ENCODE measurements at regions of chr4 and their contacts with region 1.

Region 1: GRCh38 chr4:41751449-41752061 is 3.0 kb upstream of the PHOX2B start:
- DNase-seq: peak; percentile 78
- H3K4me3 ChIP-seq: peak overlapping the region in 1 of 2 experiments; percentile 56; a peak in 1 of 4 replicates
- H3K27ac ChIP-seq: peak overlapping the region in 1 of 2 experiments; percentile 100; a peak in 2 of 4 replicates
- H3K4me1 ChIP-seq: peaks cover 0 to 34% of the 10 kb centered on the region in 2 experiments; a peak in 2 of 4 replicates
- H3K27me3 ChIP-seq: peaks cover 63% of the 10 kb centered on the region
- CTCF ChIP-seq: peak; percentile 36
- EP300 ChIP-seq: no peak
- RAD21 ChIP-seq: peak; percentile 32

Region 2: DNA sequence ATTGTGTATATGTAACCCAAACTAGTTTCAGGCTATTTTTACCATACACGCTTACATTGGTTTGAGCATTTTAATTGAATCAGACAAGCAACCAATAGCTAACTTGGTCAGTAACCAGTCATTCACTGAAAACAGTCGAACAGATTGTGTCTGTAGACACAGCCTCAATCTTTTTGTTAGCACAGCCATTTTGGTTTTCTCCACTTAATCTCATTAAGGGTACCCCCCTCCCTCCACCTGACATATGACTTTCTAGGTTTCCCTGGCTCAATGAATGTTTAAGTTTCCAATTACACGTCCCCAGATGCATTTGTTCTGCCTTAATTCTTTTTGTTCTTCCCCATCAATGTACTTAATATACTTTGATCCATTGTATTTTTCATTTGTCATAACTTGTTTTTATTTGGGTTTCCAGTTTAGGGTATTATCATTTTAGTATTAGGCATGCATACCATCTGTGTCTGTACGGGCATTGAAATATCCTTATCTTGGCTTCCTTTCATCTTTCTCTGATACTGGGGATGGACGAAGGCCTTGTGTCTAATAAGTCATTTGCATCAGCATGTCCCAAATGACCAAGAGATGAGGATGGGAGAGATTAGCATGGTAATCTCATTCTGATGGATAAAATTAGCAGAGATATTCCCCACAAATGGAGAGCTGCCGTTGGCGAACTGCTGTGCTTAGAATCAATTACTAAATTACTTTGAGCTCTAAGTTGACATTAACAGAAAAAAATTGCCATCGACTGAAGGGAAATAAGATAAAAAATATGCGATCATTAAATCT is 32.8 kb after region 1 on chr4:
- CTCF ChIA-PET with region 1: interaction called, 7 read pairs
- POLR2A ChIA-PET with region 1: interaction called, 18 read pairs
- DNase-seq: peak; percentile 62
- H3K4me3 ChIP-seq: no peak overlapping the region; a peak in 1 of 4 replicates
- H3K27ac ChIP-seq: peak overlapping the region in 1 of 2 experiments; percentile 98; a peak in 2 of 4 replicates
- H3K4me1 ChIP-seq: peaks cover 0 to 24% of the 10 kb centered on the region in 2 experiments; a peak in 2 of 4 replicates
- H3K27me3 ChIP-seq: no peaks in the 10 kb centered on the region
- CTCF ChIP-seq: no peak
- EP300 ChIP-seq: peak in 1 of 2 experiments; percentile 83; a peak in 2 of 4 replicates
- RAD21 ChIP-seq: no peak

Region 3: DNA sequence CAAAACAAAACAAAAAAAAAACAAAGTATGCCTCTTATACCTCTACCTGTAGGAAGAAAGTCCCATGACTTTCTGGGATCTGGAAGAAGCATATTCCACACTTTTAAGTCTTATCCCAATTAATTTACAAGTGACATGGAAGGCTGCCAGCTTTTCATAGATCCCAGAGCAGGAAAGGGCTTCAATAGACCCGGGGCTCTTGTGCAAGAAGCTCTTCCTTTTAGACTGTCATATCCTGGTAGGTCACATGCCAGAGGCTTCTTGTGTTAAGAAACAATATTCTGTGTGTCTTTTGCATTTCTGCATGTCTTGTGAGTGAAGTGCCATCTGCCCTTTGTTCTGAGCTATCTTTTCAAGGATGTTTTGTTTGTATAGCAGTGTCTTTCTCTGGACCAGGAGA is 81.4 kb after region 1 on chr4:
- CTCF ChIA-PET with region 1: interaction called, 9 read pairs
- POLR2A ChIA-PET with region 1: interaction called, 39 read pairs
- DNase-seq: no peak
- H3K4me3 ChIP-seq: no peak overlapping the region
- H3K27ac ChIP-seq: peak overlapping the region in 1 of 2 experiments; percentile 88; a peak in 2 of 4 replicates
- H3K4me1 ChIP-seq: peaks cover 0 to 11% of the 10 kb centered on the region in 2 experiments; a peak in 2 of 4 replicates
- H3K27me3 ChIP-seq: no peaks in the 10 kb centered on the region
- CTCF ChIP-seq: no peak
- EP300 ChIP-seq: no peak
- RAD21 ChIP-seq: no peak

Region 4: DNA sequence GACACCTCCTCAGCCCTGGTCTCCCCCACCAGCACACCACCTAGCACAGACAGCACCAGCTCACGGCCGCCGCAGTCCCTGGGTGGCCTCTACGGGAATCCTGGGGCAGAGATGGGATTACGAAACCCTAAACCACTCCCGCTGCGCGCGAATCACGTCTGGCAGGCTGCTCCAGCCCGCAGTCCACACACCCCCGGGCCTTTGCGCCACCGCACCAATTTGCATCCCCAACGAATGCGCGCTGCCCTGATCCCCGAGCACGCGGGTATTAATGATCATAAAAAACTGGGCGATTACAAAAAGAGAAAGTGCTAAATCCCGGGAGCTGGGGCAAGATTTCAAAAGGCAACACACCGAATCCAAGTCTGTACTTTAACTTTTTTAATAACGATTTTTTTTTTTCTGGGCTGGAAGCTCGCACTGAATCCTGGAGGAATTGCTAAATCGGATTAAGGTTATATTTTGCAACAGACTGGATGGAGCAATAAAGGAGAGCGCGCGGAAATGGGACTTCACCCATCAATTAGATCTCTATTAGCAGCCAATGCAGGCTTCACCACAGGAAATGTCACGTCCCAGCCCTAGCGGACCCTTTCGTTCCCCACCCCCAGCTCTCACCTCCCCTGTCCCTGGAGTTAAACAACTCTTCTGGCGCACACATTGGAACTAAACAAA is 113.9 kb after region 1 on chr4:
- CTCF ChIA-PET with region 1: interaction called, 34 read pairs
- POLR2A ChIA-PET with region 1: interaction called, 288 read pairs
- DNase-seq: no peak
- H3K4me3 ChIP-seq: no peak overlapping the region
- H3K27ac ChIP-seq: peak overlapping the region in 1 of 2 experiments; percentile 100; a peak in 2 of 4 replicates
- H3K4me1 ChIP-seq: peaks cover 0 to 46% of the 10 kb centered on the region in 2 experiments; a peak in 2 of 4 replicates
- H3K27me3 ChIP-seq: no peaks in the 10 kb centered on the region
- CTCF ChIP-seq: no peak
- EP300 ChIP-seq: no peak
- RAD21 ChIP-seq: no peak

Region 5: GRCh38 chr4:41882625-41883347 is 131.2 kb after region 1 on chr4:
- CTCF ChIA-PET with region 1: interaction called, 35 read pairs
- POLR2A ChIA-PET with region 1: interaction called, 461 read pairs
- DNase-seq: peak; percentile 90
- H3K4me3 ChIP-seq: peak overlapping the region; percentile 58
- H3K27ac ChIP-seq: peak overlapping the region in 1 of 2 experiments; percentile 99; a peak in 2 of 4 replicates
- H3K4me1 ChIP-seq: peaks cover 0 to 47% of the 10 kb centered on the region in 2 experiments; a peak in 3 of 4 replicates
- H3K27me3 ChIP-seq: peaks cover 52% of the 10 kb centered on the region
- CTCF ChIP-seq: peak; percentile 95
- EP300 ChIP-seq: peak in 1 of 2 experiments; percentile 38; a peak in 2 of 4 replicates
- RAD21 ChIP-seq: peak; percentile 75

Region 6: DNA sequence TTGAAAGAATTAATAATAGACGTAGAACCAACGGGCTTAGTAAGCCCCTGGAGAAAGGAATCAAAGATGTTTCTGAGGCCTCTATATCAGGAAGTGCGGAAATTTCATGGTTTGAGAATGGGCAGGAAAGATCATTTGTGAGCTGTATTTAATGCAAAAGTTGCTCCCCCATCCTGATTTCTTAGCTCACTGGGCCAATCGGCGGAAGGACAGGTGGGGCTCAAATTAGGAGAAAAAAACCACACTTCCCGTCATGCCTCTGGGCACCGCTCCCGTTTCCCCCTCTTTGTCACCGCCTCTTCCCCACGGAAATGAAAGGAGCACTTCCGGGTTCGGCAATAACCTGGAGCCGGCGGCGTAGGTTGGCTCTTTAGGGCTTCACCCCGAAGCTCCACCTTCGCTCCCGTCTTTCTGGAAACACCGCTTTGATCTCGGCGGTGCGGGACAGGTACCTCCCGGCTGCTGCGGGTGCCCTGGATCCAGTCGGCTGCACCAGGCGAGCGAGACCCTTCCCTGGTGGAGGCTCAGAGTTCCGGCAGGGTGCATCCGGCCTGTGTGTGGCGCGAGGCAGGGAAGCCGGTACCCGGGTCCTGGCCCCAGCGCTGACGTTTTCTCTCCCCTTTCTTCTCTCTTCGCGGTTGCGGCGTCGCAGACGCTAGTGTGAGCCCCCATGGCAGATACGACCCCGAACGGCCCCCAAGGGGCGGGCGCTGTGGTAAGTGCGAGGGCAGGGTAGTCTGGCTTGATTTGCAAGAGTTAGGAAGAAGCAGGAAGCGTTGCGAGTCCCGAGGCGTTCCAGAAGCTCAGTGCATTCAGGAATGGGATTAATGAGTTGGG is 183.5 kb after region 1 on chr4 and contains the start of gene TMEM33:
- CTCF ChIA-PET with region 1: no interaction called
- POLR2A ChIA-PET with region 1: interaction called, 12 read pairs
- DNase-seq: peak; percentile 88
- H3K4me3 ChIP-seq: peak within 1 kb of the TSS; percentile 78 to 99
- H3K27ac ChIP-seq: peak within 1 kb of the TSS; percentile 75 to 90
- H3K4me1 ChIP-seq: peaks cover 8 to 21% of the 10 kb centered on the region in 2 experiments; a peak in 3 of 4 replicates
- H3K27me3 ChIP-seq: no peaks in the 10 kb centered on the region
- CTCF ChIP-seq: peak; percentile 21
- EP300 ChIP-seq: no peak
- RAD21 ChIP-seq: no peak
- polyA plus RNA-seq, gene TMEM33: 31.2 and 43.2 TPM in 2 replicates

Measured in SK-N-SH (cell line).